ENCODE measurements at regions of chr6 and their contacts with region 1.

Region 1: DNA sequence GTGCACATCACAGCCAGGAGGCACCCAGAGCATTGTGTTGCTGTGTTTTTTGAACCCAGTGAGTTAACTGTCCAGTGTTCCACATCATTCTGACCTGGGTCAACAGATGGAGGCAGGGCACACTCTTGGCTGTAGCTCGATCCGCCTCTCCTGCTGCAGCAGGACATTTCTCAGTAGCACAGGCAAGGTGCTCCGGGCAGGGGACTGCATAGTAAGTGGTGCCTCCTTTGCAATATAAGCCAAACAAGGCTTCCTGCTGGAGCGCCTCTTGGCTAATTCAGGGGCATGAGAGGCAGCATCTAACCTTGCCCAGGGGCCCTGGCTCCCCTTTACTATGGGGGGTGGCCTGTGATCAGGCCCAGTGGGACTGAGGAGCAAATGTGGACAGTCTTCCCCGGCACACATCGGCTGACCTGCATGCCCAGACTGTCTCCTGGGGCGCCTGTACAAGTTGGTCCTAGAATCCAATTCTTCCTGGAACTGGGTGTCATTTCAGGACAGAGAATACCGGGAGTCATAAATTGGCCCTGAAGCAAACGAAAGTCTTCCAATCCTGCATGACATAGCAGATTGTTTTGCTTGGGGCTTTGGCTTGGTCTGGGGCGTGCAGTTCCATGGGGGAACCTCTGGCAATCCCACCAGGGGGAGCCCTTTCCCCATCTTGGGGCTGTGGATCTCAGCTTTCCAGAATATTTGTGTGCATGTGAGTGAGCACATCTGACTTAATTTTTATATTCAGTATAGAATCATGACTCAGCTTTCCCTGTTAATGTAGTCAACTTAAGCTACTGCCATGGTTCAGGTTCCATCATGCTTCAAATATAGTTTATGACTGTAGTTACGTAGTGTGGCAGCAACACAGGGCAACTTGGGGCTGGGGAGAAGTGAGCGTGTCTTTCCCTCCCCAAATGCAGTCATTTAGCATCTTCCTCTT is 56.0 kb upstream of the DDR1 start:
- DNase-seq: peak; percentile 90 to 93 (median 92)
- H3K4me3 ChIP-seq: peak overlapping the region in 2 of 3 donors; percentile 33 to 44
- H3K27ac ChIP-seq: peak overlapping the region; percentile 33 to 72
- H3K4me1 ChIP-seq: peaks cover 4 to 12% (median 10%) of the 10 kb centered on the region in 3 donors
- H3K27me3 ChIP-seq: no peaks in the 10 kb centered on the region
- CTCF ChIP-seq: peak; percentile 88

Region 2: GRCh38 chr6:30877419-30878371 is 49.4 kb after region 1 on chr6:
- intact Hi-C with region 1: loop called (anchors 10 kb)
- DNase-seq: peak; percentile 91 to 96 (median 94)
- H3K4me3 ChIP-seq: peak overlapping the region; percentile 35 to 71 (median 57)
- H3K27ac ChIP-seq: peak overlapping the region; percentile 58 to 81
- H3K4me1 ChIP-seq: peaks cover 9 to 16% (median 13%) of the 10 kb centered on the region in 3 donors
- H3K27me3 ChIP-seq: no peaks in the 10 kb centered on the region
- CTCF ChIP-seq: peak; percentile 93

Region 3: DNA sequence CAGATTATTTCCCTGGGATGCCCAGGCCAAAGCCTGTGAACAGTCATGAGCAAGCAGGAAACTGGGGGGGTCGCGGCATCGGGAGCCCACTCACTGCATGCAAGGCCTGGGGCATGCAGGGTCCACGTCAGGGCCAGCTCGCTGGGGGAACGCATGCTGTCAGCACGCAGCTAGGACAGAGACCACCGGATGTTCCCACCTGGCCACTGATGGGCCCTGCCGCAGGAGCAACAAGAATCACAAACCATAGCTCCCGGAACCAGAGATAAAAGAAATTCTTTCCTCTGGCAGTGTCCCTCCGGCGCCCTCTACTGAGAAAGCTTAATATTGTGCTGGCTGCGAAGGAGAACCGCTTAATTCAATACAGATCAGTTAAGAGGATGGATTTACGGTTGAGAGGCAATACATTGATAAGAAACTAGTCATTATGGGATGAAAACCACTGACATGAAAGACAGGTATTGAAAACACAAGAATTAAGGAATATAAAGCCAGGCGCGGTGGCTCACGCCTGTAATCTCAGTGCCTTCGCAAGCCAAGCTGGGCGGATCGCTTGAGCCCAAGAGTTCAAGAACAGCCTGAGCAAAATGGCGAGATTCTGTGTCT is 251.5 kb after region 1 on chr6:
- intact Hi-C with region 1: loop called (anchors 10 kb)
- DNase-seq: peak in 4 of 5 donors; percentile 76 to 86 (median 80)
- H3K4me3 ChIP-seq: no peak overlapping the region
- H3K27ac ChIP-seq: no peak overlapping the region
- H3K4me1 ChIP-seq: peaks cover 0 to 2% (median 0%) of the 10 kb centered on the region in 3 donors
- H3K27me3 ChIP-seq: no peaks in the 10 kb centered on the region
- CTCF ChIP-seq: peak; percentile 68

Measured in kidney (tissue), 22 donors.